GM12878 (cell line): ENCODE measurements at regions of chr12 and their contacts with region 1.

Region 1: DNA sequence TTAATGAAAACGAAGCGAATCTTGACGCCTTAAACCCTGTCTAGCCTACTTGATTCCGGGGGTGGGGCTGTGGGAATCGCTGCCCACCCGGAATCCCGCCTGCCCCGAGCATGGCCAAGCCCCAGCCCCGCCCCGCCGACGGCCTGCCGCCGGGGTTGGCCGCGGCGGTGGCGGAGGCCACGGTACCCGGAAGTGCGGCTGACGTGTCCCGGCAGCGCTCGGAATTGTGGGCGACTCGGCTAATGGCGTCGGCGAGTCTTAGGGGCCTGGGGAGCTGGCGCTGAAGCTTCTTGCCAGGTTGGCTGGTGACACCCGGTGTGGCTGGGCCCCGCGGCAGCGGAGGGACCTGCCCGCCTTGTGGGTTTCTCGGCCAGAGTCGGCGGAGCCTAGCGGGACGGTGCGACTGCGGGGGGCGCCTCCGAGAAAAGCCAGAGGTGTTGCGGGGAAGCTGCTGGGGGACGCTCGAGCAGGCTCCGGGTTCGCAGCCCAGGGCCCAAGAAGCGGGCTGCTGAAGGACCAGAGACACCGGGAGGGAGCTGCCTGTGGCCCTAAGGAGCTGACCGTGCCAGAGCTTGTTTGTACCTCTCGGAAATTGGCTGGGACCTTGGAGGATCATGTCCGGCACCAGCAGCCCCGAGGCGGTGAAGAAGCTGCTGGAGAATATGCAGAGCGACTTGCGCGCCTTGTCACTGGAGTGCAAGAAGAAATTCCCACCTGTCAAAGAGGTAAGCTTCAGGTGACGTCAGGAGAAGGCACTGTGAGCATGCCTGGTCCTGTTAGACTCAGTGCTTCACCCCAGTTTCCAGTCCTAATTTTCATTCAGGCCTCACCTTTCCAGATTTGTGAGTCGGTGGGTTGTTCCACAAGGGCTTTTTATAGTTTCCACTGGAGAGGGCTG is at the start of gene MON2:
- DNase-seq: peak; percentile 41
- ATAC-seq: peak; percentile 99
- H3K4me3 ChIP-seq: peak within 1 kb of the TSS; percentile 87
- H3K27ac ChIP-seq: peak within 1 kb of the TSS; percentile 91
- H3K4me1 ChIP-seq: no peaks in the 10 kb centered on the region
- H3K27me3 ChIP-seq: no peaks in the 10 kb centered on the region
- CTCF ChIP-seq: no peak
- EP300 ChIP-seq: no peak
- POLR2A ChIP-seq: peak; percentile 98
- RAD21 ChIP-seq: no peak
- polyA plus RNA-seq, gene MON2: 5.4 to 5.9 TPM

Region 2: DNA sequence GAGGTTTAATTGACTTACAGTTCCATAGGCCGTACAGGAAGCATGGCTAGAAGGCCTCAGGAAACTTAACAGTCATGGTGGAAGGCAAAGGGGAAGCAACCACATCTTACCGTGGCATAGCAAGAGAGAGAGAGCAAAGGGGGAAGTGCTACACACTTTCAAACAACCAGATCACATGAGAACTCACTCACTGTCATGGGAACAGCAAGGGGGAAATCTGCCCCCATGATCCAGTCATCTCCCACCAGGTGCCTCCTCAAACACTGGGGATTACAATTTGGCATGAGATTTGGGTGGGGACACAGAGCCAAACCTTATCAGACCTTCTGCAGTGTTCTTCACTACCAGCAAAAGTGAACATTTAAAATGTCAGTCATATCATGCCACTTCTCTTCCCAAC is 147.8 kb before region 1 on chr12:
- CTCF ChIA-PET with region 1: no interaction called
- POLR2A ChIA-PET with region 1: no interaction called
- RAD21 ChIA-PET with region 1: no interaction called
- SMC1A ChIA-PET with region 1: no interaction called
- in situ Hi-C with region 1: no loop called
- intact Hi-C with region 1: no loop called
- DNase-seq: no peak
- ATAC-seq: no peak
- H3K4me3 ChIP-seq: no peak overlapping the region
- H3K27ac ChIP-seq: no peak overlapping the region
- H3K4me1 ChIP-seq: no peaks in the 10 kb centered on the region
- H3K27me3 ChIP-seq: no peaks in the 10 kb centered on the region
- CTCF ChIP-seq: no peak
- EP300 ChIP-seq: no peak
- POLR2A ChIP-seq: no peak
- RAD21 ChIP-seq: no peak

Region 3: DNA sequence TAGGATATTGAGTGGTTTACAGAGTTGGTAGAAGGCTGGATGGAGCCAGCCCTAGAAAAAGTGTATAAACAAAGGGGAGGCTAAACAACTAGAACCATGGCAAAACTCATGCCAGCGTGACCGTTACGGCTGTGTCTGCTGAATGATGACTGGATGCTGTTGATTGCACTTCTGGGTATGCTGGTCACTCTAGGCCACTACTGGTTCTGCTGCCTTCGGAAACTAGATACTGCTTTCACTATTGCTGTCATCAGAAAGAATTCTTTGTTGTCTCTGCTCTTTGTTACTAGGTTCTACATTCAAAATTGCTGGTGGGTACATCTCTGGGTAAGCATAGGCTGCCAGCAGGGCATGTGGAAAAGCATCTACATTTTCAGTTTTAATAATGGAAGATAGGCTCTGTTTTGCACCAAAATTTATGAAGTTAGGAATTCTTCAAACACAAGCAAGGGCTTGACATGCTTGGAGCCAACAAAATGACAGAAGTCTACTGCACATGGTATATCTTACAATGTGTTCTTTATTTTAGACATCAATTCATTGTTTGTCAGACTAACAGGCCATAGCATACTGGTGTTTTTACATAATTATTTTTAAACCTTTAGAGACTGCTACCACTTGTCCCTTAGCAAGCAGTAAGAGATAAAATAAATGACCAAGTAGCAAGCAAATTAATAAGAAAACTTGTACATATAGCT is 15.1 kb after region 1 on chr12:
- CTCF ChIA-PET with region 1: interaction called, 4 read pairs
- POLR2A ChIA-PET with region 1: interaction called, 6 read pairs
- RAD21 ChIA-PET with region 1: no interaction called
- SMC1A ChIA-PET with region 1: interaction called, 11 read pairs
- in situ Hi-C with region 1: no loop called
- intact Hi-C with region 1: no loop called
- DNase-seq: no peak
- ATAC-seq: peak; percentile 32
- H3K4me3 ChIP-seq: no peak overlapping the region
- H3K27ac ChIP-seq: no peak overlapping the region
- H3K4me1 ChIP-seq: no peaks in the 10 kb centered on the region; the same call in 1 of the 2 replicates
- H3K27me3 ChIP-seq: no peaks in the 10 kb centered on the region
- CTCF ChIP-seq: no peak
- EP300 ChIP-seq: no peak
- POLR2A ChIP-seq: no peak
- RAD21 ChIP-seq: no peak

Region 4: GRCh38 chr12:63045020-63045860 is 578.4 kb after region 1 on chr12:
- CTCF ChIA-PET with region 1: no interaction called
- POLR2A ChIA-PET with region 1: no interaction called
- RAD21 ChIA-PET with region 1: no interaction called
- SMC1A ChIA-PET with region 1: no interaction called
- in situ Hi-C with region 1: no loop called
- intact Hi-C with region 1: no loop called
- DNase-seq: no peak
- ATAC-seq: no peak
- H3K4me3 ChIP-seq: no peak overlapping the region
- H3K27ac ChIP-seq: no peak overlapping the region
- H3K4me1 ChIP-seq: no peaks in the 10 kb centered on the region
- H3K27me3 ChIP-seq: no peaks in the 10 kb centered on the region
- CTCF ChIP-seq: no peak
- EP300 ChIP-seq: no peak
- POLR2A ChIP-seq: no peak
- RAD21 ChIP-seq: no peak